ENCODE measurements at regions of chr9 and their contacts with region 1.

Region 1: GRCh38 chr9:36023260-36024048 is 13.3 kb upstream of the RECK start:
- DNase-seq: peak; percentile 63 to 88 (median 70)
- H3K4me3 ChIP-seq: no peak overlapping the region
- H3K27ac ChIP-seq: no peak overlapping the region
- H3K4me1 ChIP-seq: no peaks in the 10 kb centered on the region
- H3K27me3 ChIP-seq: no peaks in the 10 kb centered on the region
- CTCF ChIP-seq: peak; percentile 57 to 81 (median 74)
- POLR2A ChIP-seq: no peak

Region 2: DNA sequence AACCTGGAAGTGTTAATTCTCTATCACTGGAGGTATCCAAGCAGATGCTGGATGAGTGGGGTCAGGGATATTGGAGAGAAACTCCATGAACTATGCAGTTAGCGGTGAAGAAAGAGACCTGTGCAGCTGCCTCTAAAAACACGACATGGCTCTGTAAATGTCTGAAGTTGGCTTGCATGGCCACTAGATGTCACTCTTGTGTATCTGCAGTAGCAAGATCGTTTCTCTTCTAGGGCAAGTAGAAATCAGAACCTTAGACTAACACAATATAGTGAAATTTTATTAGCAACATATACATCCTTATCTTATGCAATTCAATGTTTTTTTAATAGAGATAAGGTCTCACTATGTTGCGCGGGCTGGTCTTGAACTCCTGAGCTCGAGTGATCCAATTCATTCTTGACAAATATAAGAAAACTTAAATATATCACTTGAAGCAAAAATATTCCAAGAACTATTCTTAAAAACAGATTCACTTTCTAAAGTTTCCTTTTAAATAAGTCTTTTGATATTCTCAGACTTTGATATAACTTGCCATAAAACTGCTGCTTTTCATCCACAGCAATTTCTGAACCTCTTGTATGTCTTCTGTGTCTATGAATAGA is 68.4 kb before region 1 on chr9:
- intact Hi-C with region 1: loop called in 1 of 2 experiments (anchors 5 kb)
- DNase-seq: peak; percentile 43 to 85 (median 66)
- H3K4me3 ChIP-seq: no peak overlapping the region
- H3K27ac ChIP-seq: no peak overlapping the region
- H3K4me1 ChIP-seq: no peaks in the 10 kb centered on the region
- H3K27me3 ChIP-seq: no peaks in the 10 kb centered on the region
- CTCF ChIP-seq: peak; percentile 76 to 87 (median 79)
- POLR2A ChIP-seq: no peak

Region 3: DNA sequence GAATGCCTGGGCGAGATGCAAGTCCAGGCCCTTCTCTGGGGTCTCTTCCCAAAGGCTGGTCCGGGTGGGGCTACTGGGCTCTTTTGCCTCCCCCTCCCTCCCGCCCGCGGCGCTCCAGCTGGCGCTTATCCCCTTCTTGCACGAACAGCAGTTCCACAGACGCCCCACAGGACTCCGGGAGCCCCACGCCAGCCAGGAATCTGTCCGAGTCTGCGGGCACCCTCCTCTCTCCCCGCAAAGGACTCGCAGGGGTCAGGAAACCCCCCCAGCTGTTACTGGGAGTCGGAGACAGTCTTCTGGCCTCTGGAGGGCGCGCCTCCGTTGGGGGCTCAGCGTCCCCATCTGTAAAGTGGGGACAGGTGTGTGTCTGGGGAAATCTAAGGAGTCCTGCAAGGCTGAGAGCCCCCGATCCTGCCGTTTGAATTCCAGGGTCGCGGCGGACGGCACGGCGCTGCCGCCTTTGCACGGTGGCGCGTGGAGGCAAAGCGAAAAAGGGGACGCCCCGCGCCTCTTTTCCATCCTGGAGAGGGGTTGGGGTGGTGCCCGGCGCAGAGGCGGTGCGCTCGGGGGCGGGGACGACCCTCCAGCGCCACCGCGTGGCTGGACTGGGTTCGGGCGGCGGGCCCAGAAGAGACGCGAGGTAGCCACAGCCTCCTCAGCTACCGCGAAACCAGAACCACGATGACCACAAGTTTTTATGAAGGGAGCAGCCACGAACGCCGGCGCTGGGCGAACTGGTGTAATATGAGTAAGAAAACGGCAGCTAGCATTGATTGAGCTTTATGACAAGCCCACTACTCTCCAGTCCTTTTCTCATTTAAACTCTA is 142.9 kb after region 1 on chr9:
- intact Hi-C with region 1: loop called (anchors 10 kb)
- DNase-seq: peak; percentile 75 to 90 (median 85)
- H3K4me3 ChIP-seq: peak overlapping the region in 3 of 4 donors; percentile 1 to 59 (median 34)
- H3K27ac ChIP-seq: peak overlapping the region in 2 of 5 donors; percentile 41 to 90
- H3K4me1 ChIP-seq: peaks cover 11 to 22% of the 10 kb centered on the region in 2 donors
- H3K27me3 ChIP-seq: no peaks in the 10 kb centered on the region
- CTCF ChIP-seq: peak; percentile 88 to 97 (median 92)
- POLR2A ChIP-seq: no peak

Region 4: DNA sequence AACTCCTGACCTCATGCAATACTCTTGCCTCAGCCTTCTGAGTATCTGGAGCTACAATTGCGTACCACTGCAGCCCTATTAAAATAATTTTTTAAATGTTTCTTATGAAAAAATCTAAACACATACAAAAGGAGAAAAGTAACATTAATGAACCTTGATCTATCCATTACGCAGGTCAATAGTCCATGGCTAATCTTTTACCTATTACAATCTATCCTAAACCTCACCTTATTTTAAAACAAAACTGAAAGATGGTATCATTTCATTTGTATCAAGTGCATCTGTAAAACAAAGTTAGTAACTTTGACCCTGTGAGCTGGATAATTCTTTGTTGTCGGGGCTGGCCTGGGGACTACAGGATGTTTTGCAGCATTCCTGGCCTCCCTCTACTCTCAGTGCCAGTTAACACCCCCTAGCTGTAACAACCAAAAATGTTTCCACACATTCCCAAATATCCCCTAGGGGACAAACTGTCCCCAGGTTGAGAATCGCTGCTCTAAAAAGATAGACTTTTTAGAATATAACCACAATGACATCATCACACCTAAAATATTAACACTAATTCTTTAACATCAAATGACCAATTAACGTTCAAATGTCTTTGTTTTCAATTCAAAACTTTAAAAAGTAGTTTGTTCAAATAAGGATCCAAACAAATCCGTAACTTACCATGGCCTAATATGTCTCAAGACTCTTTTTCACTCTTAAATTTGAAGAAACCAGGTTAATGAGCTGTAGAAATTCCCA is 321.8 kb after region 1 on chr9:
- intact Hi-C with region 1: no loop called
- DNase-seq: no peak
- H3K4me3 ChIP-seq: no peak overlapping the region
- H3K27ac ChIP-seq: no peak overlapping the region
- H3K4me1 ChIP-seq: no peaks in the 10 kb centered on the region
- H3K27me3 ChIP-seq: no peaks in the 10 kb centered on the region
- CTCF ChIP-seq: no peak
- POLR2A ChIP-seq: no peak